ENCODE measurements at regions of chr19 and their contacts with region 1.

Region 1: DNA sequence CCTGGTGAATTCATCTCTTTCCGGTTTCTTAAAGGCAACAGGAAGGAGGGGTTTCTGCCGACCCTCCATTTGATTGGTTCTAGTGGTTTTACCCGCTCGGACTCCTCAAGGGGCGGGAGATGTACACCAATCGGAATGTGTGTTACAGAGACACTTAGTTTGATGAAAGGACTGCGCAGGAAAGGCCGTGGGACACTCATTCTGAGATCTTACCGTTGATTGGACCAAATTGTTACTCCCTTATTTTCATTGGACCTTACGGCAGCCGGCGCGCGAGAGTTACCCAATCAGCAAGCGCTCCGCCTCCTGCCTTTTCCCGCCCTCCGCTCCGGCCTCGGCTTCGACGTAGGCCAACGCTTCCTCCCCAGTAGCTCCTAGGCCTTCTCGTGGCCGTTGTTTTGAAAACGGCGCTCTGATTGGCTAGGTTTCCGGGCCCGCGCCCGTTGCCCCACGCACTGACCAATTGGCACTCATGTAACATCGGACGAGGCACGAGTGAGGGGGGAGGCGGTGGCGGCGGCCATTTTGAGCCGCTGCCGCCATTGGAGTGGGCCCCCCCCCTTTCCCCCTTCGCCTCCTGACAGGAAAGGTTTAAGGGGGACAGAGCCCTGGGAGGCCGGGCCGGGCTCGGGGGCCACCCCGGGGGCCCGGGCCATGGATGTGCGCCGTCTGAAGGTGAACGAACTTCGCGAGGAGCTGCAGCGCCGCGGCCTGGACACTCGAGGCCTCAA is at the start of gene HNRNPUL1:
- DNase-seq: peak; percentile 100
- ATAC-seq: peak; percentile 71 to 80
- H3K4me3 ChIP-seq: peak within 1 kb of the TSS; percentile 88
- H3K27ac ChIP-seq: peak within 1 kb of the TSS; percentile 96 to 99
- H3K4me1 ChIP-seq: peaks cover 26% of the 10 kb centered on the region
- CTCF ChIP-seq: peak; percentile 44
- EP300 ChIP-seq: no peak
- POLR2A ChIP-seq: peak; percentile 29
- RAD21 ChIP-seq: no peak
- polyA plus RNA-seq, gene HNRNPUL1: 89.5 and 117 TPM in 2 replicates

Region 2: DNA sequence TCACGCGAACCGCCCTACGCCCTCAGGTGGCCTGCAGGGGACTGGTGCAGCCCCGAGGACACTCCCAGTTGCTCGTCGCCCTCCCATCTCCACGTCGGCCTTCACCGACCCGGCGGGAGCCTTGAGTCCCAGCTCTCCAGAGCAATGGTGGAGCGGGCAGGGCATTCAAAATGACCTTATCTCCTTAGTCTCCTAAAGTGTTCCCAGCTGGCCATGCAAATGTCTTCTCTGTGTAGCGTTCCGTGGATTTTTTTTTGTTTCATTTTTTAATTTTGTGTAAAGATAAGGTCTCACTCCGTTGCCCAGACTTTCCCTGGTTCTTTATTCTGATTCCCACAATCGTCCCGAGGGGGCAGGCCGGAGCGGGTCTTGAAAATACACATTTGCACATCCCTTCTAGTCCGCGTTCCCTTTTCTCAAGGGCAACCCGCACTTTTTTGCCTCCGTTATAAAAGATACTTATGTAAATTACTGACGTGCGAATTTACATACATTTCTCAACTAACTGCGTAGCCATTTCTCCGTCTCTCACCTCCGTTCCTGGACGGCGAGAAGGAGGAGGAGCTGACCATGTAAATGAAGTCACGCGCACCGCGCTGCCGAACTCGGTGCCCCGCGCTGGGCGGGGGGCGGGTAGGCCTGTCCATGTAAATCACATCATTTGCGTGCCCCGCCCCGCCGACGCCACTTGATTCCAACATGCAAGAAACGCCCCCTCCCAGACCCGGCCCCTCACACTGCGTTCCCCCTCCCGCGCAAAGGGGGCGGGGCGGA is 465.6 kb before region 1 on chr19:
- CTCF ChIA-PET with region 1: interaction called, 4 read pairs
- POLR2A ChIA-PET with region 1: interaction called, 12 read pairs
- DNase-seq: peak; percentile 99 to 100
- ATAC-seq: peak; percentile 86 to 92
- H3K4me3 ChIP-seq: peak overlapping the region; percentile 84
- H3K27ac ChIP-seq: peak overlapping the region; percentile 95 to 96
- H3K4me1 ChIP-seq: peaks cover 42% of the 10 kb centered on the region
- CTCF ChIP-seq: peak; percentile 67
- EP300 ChIP-seq: no peak
- POLR2A ChIP-seq: 0 out of 2 replicates have a peak, but pooled peaks have one; percentile 23
- RAD21 ChIP-seq: 0 out of 5 replicates have a peak, but pooled peaks have one; percentile 11 to 33

Region 3: DNA sequence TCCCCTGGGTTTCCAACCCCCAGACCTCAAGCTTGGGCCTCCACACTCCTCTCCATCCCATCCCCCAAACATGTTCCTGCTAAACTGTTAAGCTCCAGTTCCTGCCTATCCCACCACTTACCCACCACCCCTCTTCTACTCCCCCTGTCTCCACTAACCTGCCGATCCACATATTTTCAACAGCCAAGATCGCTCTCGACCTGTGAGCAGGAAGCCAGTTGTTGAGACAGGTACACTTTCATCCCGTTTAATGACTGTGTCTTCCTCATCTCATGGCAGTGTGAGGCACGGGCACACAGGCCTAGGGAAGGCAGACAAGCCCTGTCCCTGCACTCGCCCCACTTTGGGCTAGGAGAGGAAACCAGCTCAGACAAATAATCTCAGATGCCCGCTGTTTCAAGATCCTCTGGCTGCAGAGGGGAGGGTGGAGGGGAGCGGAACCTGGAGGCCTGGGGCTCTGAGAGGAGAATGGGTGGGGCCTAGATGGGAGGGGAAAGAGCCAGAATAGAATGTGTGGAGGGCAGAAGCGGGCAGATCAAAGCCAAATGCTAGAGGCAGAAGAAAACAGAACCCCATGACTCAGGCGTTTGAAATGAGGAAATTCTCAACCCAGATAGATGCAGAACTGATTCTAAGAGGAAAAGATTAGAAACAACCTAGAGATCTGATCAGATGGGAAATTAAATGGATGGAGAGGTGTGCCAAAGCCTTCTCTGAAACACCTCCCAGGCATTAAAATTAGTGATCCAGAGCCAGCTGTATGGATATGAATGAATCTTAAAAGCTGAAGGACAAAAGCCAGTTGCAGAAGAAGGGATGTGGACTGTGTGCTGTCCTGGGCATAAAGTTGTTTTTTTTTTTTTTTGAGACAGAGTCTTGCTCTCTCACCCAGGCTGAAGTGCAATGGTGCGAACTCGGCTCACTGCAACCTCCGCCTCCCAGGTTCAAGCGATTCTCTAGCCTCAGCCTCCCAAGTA is 87.9 kb before region 1 on chr19:
- CTCF ChIA-PET with region 1: interaction called, 15 read pairs
- POLR2A ChIA-PET with region 1: interaction called, 23 read pairs
- DNase-seq: peak; percentile 98 to 100
- ATAC-seq: peak; percentile 96 to 98
- H3K4me3 ChIP-seq: peak overlapping the region; percentile 40
- H3K27ac ChIP-seq: peak overlapping the region; percentile 85 to 87
- H3K4me1 ChIP-seq: peaks cover 35% of the 10 kb centered on the region
- CTCF ChIP-seq: no peak
- EP300 ChIP-seq: peak in 1 of 2 experiments; percentile 61; a peak in 2 of 5 replicates
- POLR2A ChIP-seq: no peak
- RAD21 ChIP-seq: no peak; a peak in 2 of 5 replicates

Region 4: DNA sequence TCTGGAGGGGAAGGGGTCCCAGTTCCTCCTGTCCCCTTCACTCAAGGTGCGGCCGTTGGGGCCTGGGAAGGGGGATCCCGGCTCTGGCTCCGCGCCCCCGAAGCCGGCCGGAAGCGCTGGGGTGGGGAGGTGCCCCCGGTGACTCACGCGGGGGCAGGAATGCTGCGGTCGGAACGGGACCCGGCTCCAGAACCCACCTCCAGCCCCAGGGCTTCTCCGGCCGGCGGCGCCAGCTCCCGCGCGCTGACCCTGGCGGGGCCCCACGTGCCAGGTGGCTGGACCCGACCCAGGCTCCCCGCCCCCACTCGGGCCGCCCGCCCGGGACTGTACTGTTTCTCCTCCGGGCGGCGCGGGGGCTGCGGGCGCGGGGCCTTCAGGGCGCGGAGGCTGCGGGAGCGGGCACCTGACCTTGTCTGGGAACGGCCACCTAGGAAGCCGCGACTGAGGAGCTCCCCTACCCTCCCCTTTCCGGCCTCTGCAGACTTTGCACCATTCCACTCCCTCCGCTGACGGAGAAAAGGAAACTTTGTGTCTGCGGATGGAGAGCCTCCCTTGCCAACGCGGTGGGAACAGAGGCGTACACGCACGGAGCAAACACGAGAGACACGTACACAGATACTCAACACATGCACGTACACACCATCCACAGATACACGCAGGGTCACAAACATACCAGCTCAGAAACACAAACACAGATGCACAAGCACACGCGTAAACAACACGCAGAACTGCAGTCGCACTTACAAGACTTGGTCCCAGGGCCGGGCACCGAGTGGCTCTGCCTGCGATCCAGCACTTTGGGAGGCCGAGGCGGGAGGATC is 37.8 kb before region 1 on chr19:
- CTCF ChIA-PET with region 1: interaction called, 275 read pairs
- POLR2A ChIA-PET with region 1: interaction called, 85 read pairs
- DNase-seq: peak; percentile 95 to 97
- ATAC-seq: peak; percentile 73 to 77
- H3K4me3 ChIP-seq: peak overlapping the region; percentile 41
- H3K27ac ChIP-seq: peak overlapping the region; percentile 91 to 95
- H3K4me1 ChIP-seq: peaks cover 64% of the 10 kb centered on the region
- CTCF ChIP-seq: no peak
- EP300 ChIP-seq: peak; percentile 72 to 93; a peak in 3 of 5 replicates
- POLR2A ChIP-seq: no peak; the same call in 1 of the 2 replicates
- RAD21 ChIP-seq: peak in 1 of 2 experiments; percentile 36; a peak in 3 of 5 replicates

Region 5: GRCh38 chr19:41288673-41289505 is 24.9 kb after region 1 on chr19:
- CTCF ChIA-PET with region 1: interaction called, 27 read pairs
- POLR2A ChIA-PET with region 1: interaction called, 8 read pairs
- DNase-seq: no peak
- ATAC-seq: no peak
- H3K4me3 ChIP-seq: no peak overlapping the region
- H3K27ac ChIP-seq: no peak overlapping the region
- H3K4me1 ChIP-seq: no peaks in the 10 kb centered on the region
- CTCF ChIP-seq: no peak
- EP300 ChIP-seq: no peak
- POLR2A ChIP-seq: no peak
- RAD21 ChIP-seq: no peak

Region 6: DNA sequence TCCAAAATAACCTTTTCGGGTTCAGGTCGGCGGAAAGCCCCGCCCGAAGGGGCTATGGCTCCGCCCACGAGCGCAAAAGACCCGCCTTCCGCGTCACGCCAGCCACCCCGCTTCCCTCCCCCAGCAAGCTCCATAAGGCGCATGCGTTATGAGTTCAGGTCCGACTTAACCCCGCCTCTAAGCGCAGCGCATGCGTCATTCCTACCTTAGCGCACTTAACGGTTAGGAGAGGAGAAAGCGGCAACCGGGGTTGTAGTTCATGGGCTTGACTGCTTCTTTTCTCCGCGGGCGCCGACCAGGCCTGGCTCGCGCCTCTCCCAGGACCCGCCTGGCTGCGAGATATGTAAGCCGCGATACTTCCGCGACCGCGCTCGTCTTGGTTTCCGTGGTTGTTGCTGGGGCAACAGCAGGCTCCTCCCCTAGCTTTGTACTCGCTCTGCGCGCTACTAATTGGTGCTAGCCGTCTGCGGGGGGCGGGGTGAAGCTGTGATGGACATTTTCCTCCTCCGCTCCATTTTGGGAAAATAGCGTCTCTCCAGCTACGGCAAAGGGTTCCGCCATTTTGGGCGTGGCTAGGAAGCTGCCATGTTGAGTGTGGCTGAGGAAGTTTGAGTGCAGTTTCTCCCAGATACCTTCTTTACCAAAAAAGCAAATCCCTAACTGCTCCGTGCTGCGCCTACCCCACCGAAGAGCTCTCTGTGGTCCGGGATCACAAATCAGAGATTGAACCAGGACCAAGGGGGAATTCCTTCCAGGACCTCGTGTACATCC is 99.9 kb after region 1 on chr19 and contains the start of gene B9D2:
- CTCF ChIA-PET with region 1: interaction called, 3 read pairs
- POLR2A ChIA-PET with region 1: interaction called, 19 read pairs
- DNase-seq: peak; percentile 100
- ATAC-seq: peak; percentile 89 to 93
- H3K4me3 ChIP-seq: peak within 1 kb of the TSS; percentile 66
- H3K27ac ChIP-seq: peak within 1 kb of the TSS; percentile 92 to 94
- H3K4me1 ChIP-seq: peaks cover 49% of the 10 kb centered on the region
- CTCF ChIP-seq: no peak
- EP300 ChIP-seq: no peak
- POLR2A ChIP-seq: peak; percentile 80
- RAD21 ChIP-seq: no peak
- polyA plus RNA-seq, gene B9D2: 17.5 and 19.6 TPM in 2 replicates

Measured in A549 (cell line).